ENCODE measurements at regions of chr10 and their contacts with region 1.

Region 1: DNA sequence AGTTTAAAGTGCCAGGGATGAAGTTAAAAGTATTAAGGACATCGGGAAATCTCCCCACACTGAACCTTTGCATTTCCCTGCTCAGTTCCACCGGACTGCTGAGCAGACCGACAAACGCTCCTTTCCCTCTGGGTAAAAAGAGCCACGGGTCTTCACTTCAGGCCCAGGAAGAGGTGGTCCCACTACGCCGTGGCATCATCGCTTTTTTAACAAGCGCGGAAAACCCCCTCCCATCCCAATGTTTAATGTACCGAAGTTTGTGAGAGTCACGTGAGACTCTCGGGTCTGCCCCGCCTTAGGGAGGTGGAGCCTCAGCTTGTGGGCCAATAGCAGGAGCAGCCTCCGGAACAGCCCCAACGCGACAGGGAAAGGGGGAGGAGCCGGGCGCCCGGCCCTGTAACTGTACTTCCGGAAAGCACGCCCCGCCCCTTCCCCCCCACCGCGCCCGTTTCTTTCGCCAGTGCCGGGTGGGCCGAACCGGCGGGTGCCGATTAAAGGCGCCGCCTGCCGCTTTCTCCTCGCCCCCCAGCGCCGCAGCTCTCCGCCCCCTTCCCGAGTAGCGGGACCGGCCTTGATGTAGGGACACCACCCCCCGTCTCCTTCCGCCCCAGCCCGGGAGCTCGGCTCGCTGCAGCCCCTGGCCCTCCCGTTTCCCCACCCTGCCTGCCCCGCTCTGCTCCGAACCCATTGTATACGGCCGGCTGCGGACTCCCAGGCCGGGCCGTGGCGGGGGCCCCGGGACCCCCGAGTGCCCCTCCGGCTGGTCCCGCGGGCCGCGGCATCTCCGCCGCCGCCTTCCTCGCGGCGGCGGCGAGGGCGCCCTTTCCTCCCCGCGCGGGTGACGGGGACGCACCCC is 2.2 kb upstream of the TRIM8 start:
- DNase-seq: peak; percentile 98
- H3K4me3 Mint-ChIP-seq: peak overlapping the region; percentile 87
- H3K27ac Mint-ChIP-seq: peak overlapping the region; percentile 84
- H3K4me1 Mint-ChIP-seq: peaks cover 18% of the 10 kb centered on the region
- H3K27me3 Mint-ChIP-seq: peaks cover 4% of the 10 kb centered on the region

Region 2: DNA sequence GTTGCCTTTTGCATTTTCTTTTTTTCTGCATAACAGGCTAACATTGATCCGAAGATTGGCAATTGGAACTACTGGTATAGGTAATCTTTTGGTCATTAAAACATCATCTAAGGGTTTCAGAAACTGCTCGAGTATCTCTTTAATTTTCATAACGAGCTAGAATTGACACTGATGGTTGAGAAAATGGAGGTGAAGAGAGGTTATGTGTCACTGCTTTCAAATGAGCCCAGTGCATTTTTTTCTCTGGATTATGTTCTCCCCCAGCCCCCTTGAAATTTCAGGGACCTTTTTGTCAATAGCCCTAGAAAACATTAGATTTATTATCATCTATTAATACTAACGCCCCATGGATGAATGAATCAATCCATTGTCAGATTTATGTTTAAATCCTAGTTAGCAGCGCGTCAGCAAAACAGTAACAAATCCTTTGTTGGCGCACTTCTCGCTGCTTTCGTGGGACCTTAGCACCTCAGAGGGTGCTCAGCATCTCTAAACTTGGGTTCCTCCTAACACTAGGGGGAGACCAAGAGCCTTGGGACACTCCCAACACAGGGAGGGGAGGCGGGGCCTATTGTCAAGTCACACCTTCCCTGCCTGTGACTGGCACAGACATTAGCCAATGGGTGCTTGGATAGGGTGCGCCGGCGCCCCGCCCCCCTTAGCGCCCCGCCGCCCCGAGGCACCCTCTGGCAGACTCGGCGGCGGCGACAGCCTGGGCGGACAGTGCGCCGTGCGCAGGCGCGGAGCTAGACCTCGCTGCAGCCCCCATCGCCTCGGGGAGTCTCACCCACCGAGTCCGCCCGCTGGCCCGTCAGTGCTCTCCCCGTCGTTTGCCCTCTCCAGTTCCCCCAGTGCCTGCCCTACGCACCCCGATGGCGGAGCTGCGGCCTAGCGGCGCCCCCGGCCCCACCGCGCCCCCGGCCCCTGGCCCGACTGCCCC is 138.6 kb before region 1 on chr10 and contains the start of gene SUFU:
- CTCF ChIA-PET with region 1: interaction called, 6 read pairs
- POLR2A ChIA-PET with region 1: interaction called, 24 read pairs
- DNase-seq: peak; percentile 99
- H3K4me3 Mint-ChIP-seq: no peak within 1 kb of the TSS
- H3K27ac Mint-ChIP-seq: peak within 1 kb of the TSS; percentile 73
- H3K4me1 Mint-ChIP-seq: peaks cover 41% of the 10 kb centered on the region
- H3K27me3 Mint-ChIP-seq: no peaks in the 10 kb centered on the region
- total RNA-seq, gene SUFU: 18.0 to 19.6 TPM

Region 3: DNA sequence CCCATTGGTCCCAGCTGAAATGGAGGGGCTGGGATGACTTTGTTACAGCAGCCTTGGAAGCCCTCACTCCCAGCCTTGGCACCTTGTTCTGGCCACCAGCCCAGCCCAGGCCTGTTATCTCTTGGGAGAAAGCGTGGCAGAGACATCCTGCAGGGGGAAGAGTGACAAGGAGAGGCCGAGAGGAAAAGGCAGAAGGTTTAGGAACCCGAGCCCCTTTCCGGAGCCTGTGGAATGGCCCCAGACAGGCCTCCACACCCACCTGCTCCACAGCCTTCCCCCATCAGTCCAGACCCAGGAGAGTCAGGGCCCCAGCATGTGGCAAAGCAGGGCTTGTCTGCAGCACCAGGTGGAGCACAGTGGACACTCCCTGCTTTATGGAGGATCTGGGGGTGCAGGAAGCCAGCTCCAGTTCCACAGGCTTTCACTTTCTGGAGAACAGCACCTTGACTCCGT is 21.9 kb before region 1 on chr10:
- CTCF ChIA-PET with region 1: no interaction called
- POLR2A ChIA-PET with region 1: no interaction called
- DNase-seq: no peak
- H3K4me3 Mint-ChIP-seq: no peak overlapping the region
- H3K27ac Mint-ChIP-seq: no peak overlapping the region
- H3K4me1 Mint-ChIP-seq: peaks cover 8% of the 10 kb centered on the region
- H3K27me3 Mint-ChIP-seq: no peaks in the 10 kb centered on the region

Region 4: DNA sequence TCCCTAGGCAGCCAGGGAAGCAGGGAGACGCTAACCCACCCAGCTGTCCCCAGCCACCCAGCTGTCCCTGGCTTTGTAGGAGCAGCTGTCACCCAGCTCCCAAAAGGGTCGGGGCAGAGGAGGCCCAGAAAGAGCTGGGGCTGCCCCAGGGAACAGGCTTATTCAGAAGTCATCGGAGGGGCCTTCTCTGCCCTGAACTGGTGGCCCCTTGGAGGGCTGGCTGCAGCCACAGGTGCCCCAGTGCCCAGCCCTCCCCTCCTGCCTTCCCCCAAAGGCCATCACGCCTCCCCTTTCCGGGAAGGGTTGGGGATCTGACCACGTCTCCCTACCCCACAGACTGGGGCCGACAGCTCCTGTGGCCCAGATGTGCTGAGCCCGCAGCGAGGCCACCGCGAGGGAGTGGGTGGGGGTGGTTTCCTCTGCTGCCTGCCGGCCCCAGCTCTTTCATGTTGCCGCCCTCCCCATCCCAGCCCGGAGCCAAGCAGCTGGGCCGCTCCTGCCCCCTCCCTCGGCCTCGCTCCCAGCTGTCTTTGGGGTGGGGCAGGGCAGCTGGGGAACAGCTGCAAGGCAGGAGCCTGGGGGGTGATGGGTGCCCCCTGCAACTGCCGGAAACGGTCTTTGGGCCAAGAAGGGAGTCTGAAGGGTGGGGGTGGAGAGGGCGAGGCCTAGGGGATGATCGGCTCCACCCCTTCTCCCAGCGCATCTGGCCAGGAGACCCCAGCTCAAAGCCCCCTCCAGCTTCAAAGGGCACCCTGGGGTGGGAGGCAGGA is 19.0 kb after region 1 on chr10:
- CTCF ChIA-PET with region 1: interaction called, 22 read pairs
- POLR2A ChIA-PET with region 1: interaction called, 106 read pairs
- DNase-seq: peak; percentile 77
- H3K4me3 Mint-ChIP-seq: peak overlapping the region; percentile 47
- H3K27ac Mint-ChIP-seq: peak overlapping the region; percentile 85
- H3K4me1 Mint-ChIP-seq: peaks cover 51% of the 10 kb centered on the region
- H3K27me3 Mint-ChIP-seq: no peaks in the 10 kb centered on the region

Region 5: GRCh38 chr10:102678842-102679289 is 36.8 kb after region 1 on chr10:
- CTCF ChIA-PET with region 1: interaction called, 16 read pairs
- POLR2A ChIA-PET with region 1: interaction called, 51 read pairs
- DNase-seq: no peak
- H3K4me3 Mint-ChIP-seq: no peak overlapping the region
- H3K27ac Mint-ChIP-seq: no peak overlapping the region
- H3K4me1 Mint-ChIP-seq: peaks cover 49% of the 10 kb centered on the region
- H3K27me3 Mint-ChIP-seq: no peaks in the 10 kb centered on the region

Region 6: DNA sequence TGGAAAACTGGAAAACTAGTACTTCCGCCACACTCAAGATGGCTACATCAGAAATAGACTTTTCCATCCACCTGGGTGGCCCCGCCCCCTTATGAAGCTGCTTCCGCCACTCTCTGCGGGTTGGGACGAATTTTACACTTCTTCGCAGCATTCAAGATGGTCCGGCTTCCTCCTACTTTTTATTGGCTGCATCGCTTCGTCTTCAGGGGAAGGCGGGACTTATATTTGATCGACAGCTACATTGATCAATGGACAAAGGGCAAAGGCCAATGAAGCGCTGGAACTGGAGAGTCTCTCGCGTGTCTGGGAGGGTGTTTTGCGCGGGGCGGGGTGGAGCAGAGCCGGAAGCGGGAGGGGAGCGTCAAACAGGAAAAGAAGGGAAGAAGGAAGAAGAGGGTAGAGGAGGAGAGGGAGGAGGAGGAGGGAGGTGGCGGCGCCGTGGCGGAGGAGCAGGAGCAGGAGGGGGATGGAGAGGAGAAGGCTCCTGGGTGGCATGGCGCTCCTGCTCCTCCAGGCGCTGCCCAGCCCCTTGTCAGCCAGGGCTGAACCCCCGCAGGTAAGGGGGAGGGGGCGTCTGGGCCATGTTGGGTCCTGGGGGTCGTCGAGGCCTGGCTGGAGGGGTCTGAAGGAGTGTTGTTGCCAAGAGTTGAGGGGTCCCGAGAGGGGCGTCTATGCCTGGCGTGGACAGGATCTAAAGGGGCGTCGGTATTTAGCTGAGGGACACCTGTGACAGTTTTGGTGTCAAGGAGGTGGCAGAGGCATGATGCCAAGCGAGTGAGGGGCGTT is 101.7 kb after region 1 on chr10 and contains the start of gene WBP1L:
- CTCF ChIA-PET with region 1: no interaction called
- POLR2A ChIA-PET with region 1: interaction called, 26 read pairs
- DNase-seq: peak; percentile 96
- H3K4me3 Mint-ChIP-seq: peak within 1 kb of the TSS; percentile 100
- H3K27ac Mint-ChIP-seq: peak within 1 kb of the TSS; percentile 82
- H3K4me1 Mint-ChIP-seq: peaks cover 41% of the 10 kb centered on the region
- H3K27me3 Mint-ChIP-seq: no peaks in the 10 kb centered on the region
- total RNA-seq, gene WBP1L: 31.7 to 31.9 TPM